ENCODE measurements at regions of chr4 and their contacts with region 1.

Region 1: GRCh38 chr4:186067757-186068385 is 1.1 kb upstream of the TLR3 start:
- DNase-seq: peak; percentile 31 to 34
- ATAC-seq: peak; percentile 85 to 90
- H3K4me3 ChIP-seq: peak overlapping the region; percentile 51 to 70 (median 58)
- H3K27ac ChIP-seq: peak overlapping the region in 2 of 4 donors; percentile 50 to 51
- H3K4me1 ChIP-seq: peaks cover 2 to 5% of the 10 kb centered on the region in 2 donors
- H3K27me3 ChIP-seq: no peaks in the 10 kb centered on the region
- CTCF ChIP-seq: peak in 4 of 5 experiments; percentile 21 to 43 (median 37)
- POLR2A ChIP-seq: no peak

Region 2: GRCh38 chr4:186137196-186137794 is 69.4 kb after region 1 on chr4:
- in situ Hi-C with region 1: loop called in 2 of 4 experiments (anchors 5 to 10 kb)
- intact Hi-C with region 1: loop called (anchors 10 kb)
- DNase-seq: no peak
- ATAC-seq: no peak
- H3K4me3 ChIP-seq: no peak overlapping the region
- H3K27ac ChIP-seq: no peak overlapping the region
- H3K4me1 ChIP-seq: no peaks in the 10 kb centered on the region
- H3K27me3 ChIP-seq: no peaks in the 10 kb centered on the region
- CTCF ChIP-seq: peak in 1 of 5 experiments; percentile 34
- POLR2A ChIP-seq: no peak

Region 3: GRCh38 chr4:186144142-186144955 is 76.5 kb after region 1 on chr4:
- in situ Hi-C with region 1: loop called in 2 of 4 experiments (anchors 5 to 10 kb)
- intact Hi-C with region 1: loop called (anchors 10 kb)
- DNase-seq: no peak
- ATAC-seq: peak; percentile 63 to 67
- H3K4me3 ChIP-seq: peak overlapping the region; percentile 41 to 66 (median 58)
- H3K27ac ChIP-seq: peak overlapping the region; percentile 44 to 60 (median 56)
- H3K4me1 ChIP-seq: peaks cover 0 to 9% of the 10 kb centered on the region in 2 donors
- H3K27me3 ChIP-seq: no peaks in the 10 kb centered on the region
- CTCF ChIP-seq: no peak
- POLR2A ChIP-seq: no peak

Region 4: DNA sequence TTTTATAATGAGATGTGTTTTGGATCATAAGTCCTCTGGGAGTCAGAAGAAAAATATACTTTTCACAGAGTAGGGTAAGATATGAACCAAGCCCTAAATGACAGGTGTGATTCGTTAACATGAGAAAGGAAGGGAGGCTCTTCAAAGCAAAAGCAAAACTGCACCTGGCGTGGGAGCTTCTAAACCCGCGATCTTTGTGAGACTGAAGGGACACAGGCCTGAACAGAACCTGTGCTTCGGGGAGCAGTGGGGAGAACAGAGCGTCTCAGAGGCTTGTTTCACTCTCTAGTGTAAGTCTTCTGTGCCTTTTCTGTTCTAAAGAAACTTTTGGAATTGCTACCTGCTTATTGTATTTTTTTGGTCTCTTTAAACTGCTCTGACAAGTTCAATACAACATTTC is 93.3 kb after region 1 on chr4:
- in situ Hi-C with region 1: no loop called
- intact Hi-C with region 1: no loop called
- DNase-seq: no peak
- ATAC-seq: no peak
- H3K4me3 ChIP-seq: no peak overlapping the region
- H3K27ac ChIP-seq: no peak overlapping the region
- H3K4me1 ChIP-seq: no peaks in the 10 kb centered on the region
- H3K27me3 ChIP-seq: no peaks in the 10 kb centered on the region
- CTCF ChIP-seq: no peak
- POLR2A ChIP-seq: no peak

Region 5: DNA sequence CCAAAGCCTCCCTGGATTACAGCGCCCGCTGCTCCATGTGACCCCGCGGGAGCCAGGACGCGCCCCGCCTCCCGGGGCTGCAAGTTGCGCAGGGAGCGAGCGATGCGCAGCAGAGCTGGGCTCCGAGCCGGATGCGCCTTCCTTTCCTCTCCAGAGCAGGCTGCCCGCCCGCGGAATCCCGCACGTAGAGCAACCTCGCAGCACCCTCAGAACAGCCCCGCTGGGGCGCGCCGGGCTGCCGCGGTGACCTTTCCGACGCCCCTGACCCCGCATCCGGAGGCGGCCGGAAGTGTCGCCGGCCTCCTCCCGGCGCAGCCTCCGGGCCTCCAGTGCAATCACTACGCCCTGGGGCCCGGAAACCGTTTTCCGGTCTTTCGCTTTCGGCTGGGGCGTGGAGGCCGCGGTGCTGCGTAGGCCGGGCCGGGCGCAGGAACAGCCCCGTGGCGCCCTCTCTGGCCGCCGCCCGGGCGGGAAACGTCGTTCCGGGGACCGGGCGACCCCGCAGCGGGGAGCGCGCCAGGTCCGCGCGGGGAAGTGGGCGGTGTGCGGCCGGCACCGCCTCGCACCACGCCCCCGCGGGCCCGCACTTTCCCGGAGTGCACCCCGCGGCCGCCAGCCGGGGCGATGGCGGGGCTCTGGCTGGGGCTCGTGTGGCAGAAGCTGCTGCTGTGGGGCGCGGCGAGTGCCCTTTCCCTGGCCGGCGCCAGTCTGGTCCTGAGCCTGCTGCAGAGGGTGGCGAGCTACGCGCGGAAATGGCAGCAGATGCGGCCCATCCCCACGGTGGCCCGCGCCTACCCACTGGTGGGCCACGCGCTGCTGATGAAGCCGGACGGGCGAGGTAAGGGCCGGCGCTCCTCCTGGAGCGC is 123.6 kb after region 1 on chr4 and contains the start of gene CYP4V2:
- in situ Hi-C with region 1: no loop called
- intact Hi-C with region 1: loop called (anchors 1 kb)
- DNase-seq: peak; percentile 49 to 62
- ATAC-seq: peak; percentile 85
- H3K4me3 ChIP-seq: peak within 1 kb of the TSS; percentile 74 to 96 (median 81)
- H3K27ac ChIP-seq: peak within 1 kb of the TSS; percentile 84 to 96 (median 90)
- H3K4me1 ChIP-seq: peaks cover 22 to 27% of the 10 kb centered on the region in 2 donors
- H3K27me3 ChIP-seq: no peaks in the 10 kb centered on the region
- CTCF ChIP-seq: peak in 1 of 5 experiments; percentile 45
- POLR2A ChIP-seq: peak; percentile 32 to 47
- total RNA-seq, gene CYP4V2: 2.9 to 11.0 (median 6.1) TPM

Region 6: GRCh38 chr4:186587416-186588018 is 519.6 kb after region 1 on chr4:
- in situ Hi-C with region 1: no loop called
- intact Hi-C with region 1: loop called (anchors 2 kb)
- DNase-seq: peak in 1 of 2 donors; percentile 19
- ATAC-seq: no peak
- H3K4me3 ChIP-seq: no peak overlapping the region
- H3K27ac ChIP-seq: no peak overlapping the region
- H3K4me1 ChIP-seq: no peaks in the 10 kb centered on the region
- H3K27me3 ChIP-seq: no peaks in the 10 kb centered on the region
- CTCF ChIP-seq: peak; percentile 45 to 84 (median 53)
- POLR2A ChIP-seq: no peak